ENCODE measurements at regions of chr14 and their contacts with region 1.

Region 1: GRCh38 chr14:93939304-93940229 is 12.4 kb downstream of the FAM181A start:
- DNase-seq: peak; percentile 81 to 84
- ATAC-seq: peak; percentile 77 to 97
- H3K4me3 ChIP-seq: peak overlapping the region; percentile 40
- H3K27ac ChIP-seq: peak overlapping the region in 1 of 2 experiments; percentile 36; a peak in 2 of 6 replicates
- H3K4me1 ChIP-seq: peaks cover 15% of the 10 kb centered on the region; the same call in 2 of the 3 replicates
- CTCF ChIP-seq: peak; percentile 94
- EP300 ChIP-seq: no peak
- POLR2A ChIP-seq: no peak
- RAD21 ChIP-seq: peak; percentile 81 to 96

Region 2: GRCh38 chr14:93655078-93655750 is 284.4 kb before region 1 on chr14:
- CTCF ChIA-PET with region 1: interaction called, 15 read pairs
- POLR2A ChIA-PET with region 1: no interaction called
- DNase-seq: peak; percentile 22 to 58
- ATAC-seq: peak; percentile 50 to 71; a peak in 4 of 6 replicates
- H3K4me3 ChIP-seq: no peak overlapping the region
- H3K27ac ChIP-seq: no peak overlapping the region
- H3K4me1 ChIP-seq: no peaks in the 10 kb centered on the region
- CTCF ChIP-seq: peak; percentile 59
- EP300 ChIP-seq: no peak
- POLR2A ChIP-seq: no peak
- RAD21 ChIP-seq: peak; percentile 59 to 67

Region 3: DNA sequence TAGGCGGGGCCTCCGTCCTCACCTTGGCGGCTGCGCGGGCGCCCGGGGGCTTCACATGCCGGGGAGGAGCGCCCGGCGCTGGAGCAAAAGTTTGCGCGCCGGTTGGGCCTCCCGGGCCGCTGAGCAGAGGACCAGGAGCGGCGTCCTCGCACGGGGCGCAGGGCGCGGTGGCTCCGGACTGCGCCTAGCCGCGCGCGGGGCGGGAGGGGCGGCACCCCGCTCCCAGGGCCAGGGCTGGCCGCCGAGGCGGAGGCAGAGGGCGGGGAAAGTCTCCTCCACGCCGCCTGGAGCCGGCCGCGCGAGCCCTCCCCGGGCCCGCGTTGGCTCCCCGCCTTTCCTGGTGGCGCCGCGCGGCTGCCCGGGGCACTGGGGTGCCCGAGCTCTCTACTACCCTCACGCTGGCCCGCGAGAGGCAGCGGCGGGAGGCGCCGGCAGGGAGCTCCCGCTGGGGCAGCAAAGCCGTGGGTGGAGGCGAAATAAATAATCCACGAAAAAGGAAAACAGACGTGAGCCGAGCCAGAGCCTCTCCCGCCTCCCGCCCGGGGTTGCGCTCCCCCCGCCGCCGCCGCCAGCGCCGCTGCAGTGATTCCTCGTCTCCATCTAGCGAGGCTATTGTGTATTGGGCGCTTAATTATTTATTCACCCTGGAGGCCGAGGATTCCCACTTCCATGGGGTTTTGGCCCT is 150.9 kb before region 1 on chr14:
- CTCF ChIA-PET with region 1: no interaction called
- POLR2A ChIA-PET with region 1: no interaction called
- DNase-seq: peak; percentile 41 to 74
- ATAC-seq: peak; percentile 79 to 88
- H3K4me3 ChIP-seq: peak overlapping the region; percentile 61
- H3K27ac ChIP-seq: peak overlapping the region; percentile 58 to 85; a peak in 5 of 6 replicates
- H3K4me1 ChIP-seq: 0 out of 3 replicates have a peak, but pooled peaks cover 3% of the 10 kb centered on the region
- CTCF ChIP-seq: peak; percentile 32; the same call in 2 of the 3 replicates
- EP300 ChIP-seq: no peak
- POLR2A ChIP-seq: peak; percentile 26; the same call in 1 of the 2 replicates
- RAD21 ChIP-seq: peak; percentile 55 to 58

Region 4: GRCh38 chr14:93953263-93953662 is 13.7 kb after region 1 on chr14:
- CTCF ChIA-PET with region 1: interaction called, 601 read pairs
- POLR2A ChIA-PET with region 1: no interaction called
- DNase-seq: no peak
- ATAC-seq: no peak
- H3K4me3 ChIP-seq: no peak overlapping the region
- H3K27ac ChIP-seq: no peak overlapping the region
- H3K4me1 ChIP-seq: peaks cover 1% of the 10 kb centered on the region; the same call in 2 of the 3 replicates
- CTCF ChIP-seq: no peak
- EP300 ChIP-seq: no peak
- POLR2A ChIP-seq: no peak
- RAD21 ChIP-seq: no peak

Region 5: GRCh38 chr14:93984987-93985410 is 45.4 kb after region 1 on chr14:
- CTCF ChIA-PET with region 1: interaction called, 601 read pairs
- POLR2A ChIA-PET with region 1: no interaction called
- DNase-seq: peak; percentile 56 to 76
- ATAC-seq: peak; percentile 75 to 87; a peak in 5 of 6 replicates
- H3K4me3 ChIP-seq: no peak overlapping the region
- H3K27ac ChIP-seq: 0 out of 6 replicates have a peak overlapping the region, but pooled peaks of 1 of the 2 experiments have one; percentile 20
- H3K4me1 ChIP-seq: peaks cover 15% of the 10 kb centered on the region
- CTCF ChIP-seq: peak; percentile 24
- EP300 ChIP-seq: no peak
- POLR2A ChIP-seq: no peak
- RAD21 ChIP-seq: peak; percentile 21 to 34; a peak in 1 of 5 replicates

Region 6: DNA sequence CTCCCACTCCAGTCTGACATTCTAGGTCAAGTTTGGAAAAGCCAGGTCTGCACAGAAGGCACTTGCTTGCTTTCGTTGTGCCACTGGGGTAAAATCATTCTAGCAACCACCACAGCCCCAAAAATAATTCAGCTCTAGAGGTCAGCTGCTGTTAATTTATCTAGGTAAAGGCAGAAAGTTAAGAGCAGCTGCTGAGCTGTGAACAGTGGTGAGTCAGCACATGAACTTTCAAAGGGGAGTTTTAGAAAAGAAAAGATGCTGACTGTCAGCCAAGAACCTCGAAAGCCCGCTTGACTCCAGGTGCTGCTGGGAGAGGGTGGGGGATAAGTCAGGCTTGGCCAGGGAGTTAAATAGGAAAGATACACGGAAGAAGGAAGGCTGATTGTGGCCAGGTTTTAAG is 70.2 kb after region 1 on chr14:
- CTCF ChIA-PET with region 1: interaction called, 400 read pairs
- POLR2A ChIA-PET with region 1: no interaction called
- DNase-seq: no peak
- ATAC-seq: peak; percentile 21 to 24; a peak in 2 of 6 replicates
- H3K4me3 ChIP-seq: no peak overlapping the region
- H3K27ac ChIP-seq: 0 out of 6 replicates have a peak overlapping the region, but pooled peaks of 1 of the 2 experiments have one; percentile 15
- H3K4me1 ChIP-seq: peaks cover 17% of the 10 kb centered on the region; the same call in 2 of the 3 replicates
- CTCF ChIP-seq: no peak
- EP300 ChIP-seq: no peak
- POLR2A ChIP-seq: no peak
- RAD21 ChIP-seq: no peak

Region 7: DNA sequence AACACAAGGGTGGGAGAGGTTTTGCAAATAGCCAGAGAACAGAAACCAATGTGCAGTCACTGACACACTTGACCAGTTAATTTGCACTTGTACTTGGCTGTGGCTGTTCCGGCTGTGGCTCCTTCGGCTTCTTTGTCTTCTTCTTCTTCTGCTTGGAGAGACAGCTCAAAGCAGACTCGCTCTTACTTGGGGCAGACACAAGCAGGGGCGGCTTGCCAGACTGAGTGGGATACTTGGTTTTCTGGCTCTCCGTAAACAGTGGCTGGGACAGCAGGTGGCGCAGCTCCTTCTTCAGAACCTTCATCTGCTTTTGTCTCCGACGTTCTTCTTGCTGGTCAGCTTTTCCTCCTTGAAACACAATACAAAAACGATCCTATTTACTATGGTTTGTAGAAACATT is 111.5 kb after region 1 on chr14:
- CTCF ChIA-PET with region 1: interaction called, 15 read pairs
- POLR2A ChIA-PET with region 1: no interaction called
- DNase-seq: peak in 1 of 2 experiments; percentile 41
- ATAC-seq: peak; percentile 55 to 76; a peak in 3 of 6 replicates
- H3K4me3 ChIP-seq: no peak overlapping the region
- H3K27ac ChIP-seq: no peak overlapping the region
- H3K4me1 ChIP-seq: no peaks in the 10 kb centered on the region
- CTCF ChIP-seq: peak; percentile 46
- EP300 ChIP-seq: no peak
- POLR2A ChIP-seq: no peak
- RAD21 ChIP-seq: peak; percentile 29 to 34; a peak in 3 of 5 replicates

Region 8: DNA sequence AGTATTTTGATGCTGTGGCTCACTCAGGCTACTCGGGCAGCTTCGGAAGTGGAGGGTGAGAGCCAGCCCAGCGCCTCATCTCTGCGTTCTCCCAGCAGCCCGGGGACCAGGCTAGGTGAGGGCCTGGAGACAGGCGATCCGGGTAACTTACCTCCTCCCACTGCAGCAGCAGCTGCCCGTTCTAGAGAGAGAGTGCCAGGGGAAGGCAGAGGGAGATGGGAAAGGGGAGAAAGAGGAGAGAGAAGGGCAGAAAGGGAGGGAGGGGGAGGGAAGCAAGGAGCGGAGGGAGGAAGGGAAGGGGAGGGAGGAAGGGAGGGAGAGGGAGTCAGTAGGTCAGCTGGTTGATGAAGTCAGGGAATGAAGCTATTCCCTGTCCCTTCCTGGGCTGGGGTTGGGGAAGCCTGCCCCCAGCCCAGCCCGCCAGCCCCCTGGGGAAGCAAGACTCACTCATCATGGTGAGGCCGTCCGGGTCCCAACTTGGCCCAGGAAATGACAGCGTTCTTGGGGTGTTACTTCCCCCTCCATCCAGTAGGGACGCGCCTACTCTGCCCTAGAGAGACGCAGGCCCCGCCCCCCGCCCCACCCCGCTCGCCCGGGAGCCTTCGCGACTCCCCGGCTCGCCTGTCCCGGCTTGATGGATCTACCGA is 189.7 kb after region 1 on chr14 and contains the start of gene IFI27L2:
- CTCF ChIA-PET with region 1: interaction called, 16 read pairs
- POLR2A ChIA-PET with region 1: no interaction called
- DNase-seq: peak; percentile 79 to 90
- ATAC-seq: peak; percentile 95 to 96
- H3K4me3 ChIP-seq: peak within 1 kb of the TSS; percentile 49
- H3K27ac ChIP-seq: peak within 1 kb of the TSS; percentile 66 to 81
- H3K4me1 ChIP-seq: peaks cover 4% of the 10 kb centered on the region; the same call in 2 of the 3 replicates
- CTCF ChIP-seq: no peak
- EP300 ChIP-seq: no peak
- POLR2A ChIP-seq: peak; percentile 42
- RAD21 ChIP-seq: no peak
- polyA plus RNA-seq, gene IFI27L2: 20.3 and 26.9 TPM in 2 replicates